Gastrocnemius medialis (tissue), 4 donors: ENCODE measurements at regions of chr5 and their contacts with region 1.

Region 1: DNA sequence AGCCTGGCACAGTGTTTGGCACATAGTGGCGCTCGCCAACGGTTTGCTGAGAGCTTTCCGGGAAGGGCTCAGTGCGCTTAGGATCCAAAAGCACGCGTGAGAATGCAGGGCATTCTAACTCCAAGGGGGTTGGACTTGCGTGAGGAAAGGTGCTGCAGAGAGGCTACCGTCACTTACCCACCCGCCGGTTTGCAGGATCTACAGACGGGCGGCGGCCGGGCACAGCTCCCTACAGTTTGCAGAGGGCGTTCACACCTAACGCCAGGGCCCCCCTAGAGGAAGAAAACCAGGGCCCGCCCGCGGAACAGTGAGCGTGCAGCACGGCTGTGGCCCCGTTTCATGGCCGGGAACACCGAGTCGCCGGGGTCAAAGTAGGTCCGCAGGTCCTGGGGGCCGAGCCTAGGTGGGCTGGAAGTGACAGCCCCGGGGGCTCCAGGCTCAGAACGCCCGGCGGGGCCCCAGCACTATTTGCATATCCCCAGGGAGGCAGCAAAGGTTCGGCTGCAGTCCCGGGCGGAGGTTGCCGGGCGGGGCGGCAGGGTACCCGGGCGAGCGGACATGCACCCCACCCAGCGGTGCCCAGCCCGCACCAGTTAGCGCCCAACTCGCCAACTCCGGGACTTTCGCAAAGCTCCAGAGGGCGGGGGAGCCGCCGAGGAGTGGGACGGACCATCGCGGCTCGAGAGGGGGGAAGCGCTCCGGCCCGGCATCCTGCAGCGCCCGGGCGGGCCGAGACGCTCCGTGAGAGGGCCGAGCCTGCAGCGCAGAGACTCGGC is 526 bp upstream of the GALNT10 start:
- DNase-seq: peak; percentile 55 to 74
- ATAC-seq: peak; percentile 91 to 93
- H3K4me3 ChIP-seq: peak overlapping the region; percentile 94 to 100 (median 96)
- H3K27ac ChIP-seq: peak overlapping the region; percentile 77 to 84 (median 80)
- H3K4me1 ChIP-seq: peaks cover 33 to 37% of the 10 kb centered on the region in 2 donors
- H3K27me3 ChIP-seq: no peaks in the 10 kb centered on the region
- CTCF ChIP-seq: peak in 3 of 5 experiments; percentile 19 to 54 (median 33)
- POLR2A ChIP-seq: no peak

Region 2: GRCh38 chr5:153400931-153401330 is 789.1 kb before region 1 on chr5:
- in situ Hi-C with region 1: no loop called
- intact Hi-C with region 1: no loop called
- DNase-seq: no peak
- ATAC-seq: no peak
- H3K4me3 ChIP-seq: no peak overlapping the region
- H3K27ac ChIP-seq: no peak overlapping the region
- H3K4me1 ChIP-seq: no peaks in the 10 kb centered on the region
- H3K27me3 ChIP-seq: no peaks in the 10 kb centered on the region
- CTCF ChIP-seq: no peak
- POLR2A ChIP-seq: no peak

Region 3: DNA sequence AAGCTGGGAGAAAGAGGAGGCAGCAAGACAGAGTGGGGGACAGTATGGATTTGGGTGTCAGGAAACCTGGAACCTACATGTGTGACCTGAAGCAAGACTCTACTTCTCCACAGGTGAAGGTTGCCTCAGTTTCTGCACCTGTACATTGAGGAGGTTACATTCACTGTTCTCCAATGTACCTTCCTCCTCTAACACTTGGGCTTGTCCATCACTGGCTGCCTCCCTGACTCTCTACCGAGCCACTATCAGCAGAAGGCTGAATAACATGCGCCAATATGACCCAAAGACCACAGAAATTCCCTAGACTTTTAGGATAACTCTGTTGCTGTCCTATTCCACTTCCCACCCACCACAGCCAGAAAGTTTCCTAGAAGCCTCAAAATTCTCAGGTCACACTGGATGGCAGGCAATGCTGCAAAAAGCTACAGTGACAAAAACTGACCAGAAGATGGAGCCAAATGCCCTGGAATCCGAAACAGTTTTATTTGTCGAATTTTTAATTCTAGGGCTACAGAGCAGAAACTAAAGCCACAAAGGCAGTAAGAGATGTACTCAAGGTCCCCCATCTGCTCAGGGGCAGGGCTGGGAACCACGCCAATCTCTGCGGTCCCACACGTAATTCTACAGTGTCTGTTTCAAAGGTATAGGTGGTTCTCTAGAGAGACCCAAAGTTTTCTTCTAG is 215.7 kb before region 1 on chr5:
- in situ Hi-C with region 1: no loop called
- intact Hi-C with region 1: loop called (anchors 5 kb)
- DNase-seq: no peak
- ATAC-seq: no peak
- H3K4me3 ChIP-seq: no peak overlapping the region
- H3K27ac ChIP-seq: no peak overlapping the region
- H3K4me1 ChIP-seq: no peaks in the 10 kb centered on the region
- H3K27me3 ChIP-seq: no peaks in the 10 kb centered on the region
- CTCF ChIP-seq: peak; percentile 29 to 56 (median 50)
- POLR2A ChIP-seq: no peak

Region 4: GRCh38 chr5:154038707-154039457 is 151.1 kb before region 1 on chr5 and contains the starts of genes FAM114A2 and MFAP3:
- in situ Hi-C with region 1: no loop called
- intact Hi-C with region 1: loop called (anchors 5 kb)
- DNase-seq: peak; percentile 82 to 83
- ATAC-seq: peak; percentile 96 to 98
- H3K4me3 ChIP-seq: peak within 1 kb of the TSS; percentile 75 to 93 (median 82)
- H3K27ac ChIP-seq: peak within 1 kb of the TSS; percentile 82 to 93 (median 88)
- H3K4me1 ChIP-seq: peaks cover 45 to 46% of the 10 kb centered on the region in 2 donors
- H3K27me3 ChIP-seq: no peaks in the 10 kb centered on the region
- CTCF ChIP-seq: peak in 1 of 5 experiments; percentile 7
- POLR2A ChIP-seq: peak; percentile 81 to 82
- total RNA-seq, gene FAM114A2: 12.2 to 19.0 (median 18.3) TPM
- total RNA-seq, gene MFAP3: 25.4 to 80.5 (median 28.7) TPM

Region 5: GRCh38 chr5:154072414-154073171 is 117.4 kb before region 1 on chr5:
- in situ Hi-C with region 1: loop called in 3 of 4 experiments (anchors 5 to 10 kb)
- intact Hi-C with region 1: no loop called
- DNase-seq: peak; percentile 40 to 58
- ATAC-seq: peak; percentile 73 to 89
- H3K4me3 ChIP-seq: no peak overlapping the region
- H3K27ac ChIP-seq: no peak overlapping the region
- H3K4me1 ChIP-seq: peaks cover 3 to 5% of the 10 kb centered on the region in 2 donors
- H3K27me3 ChIP-seq: no peaks in the 10 kb centered on the region
- CTCF ChIP-seq: peak; percentile 83 to 94 (median 89)
- POLR2A ChIP-seq: no peak

Region 6: GRCh38 chr5:154345255-154345952 is 155.4 kb after region 1 on chr5:
- in situ Hi-C with region 1: no loop called
- intact Hi-C with region 1: no loop called
- DNase-seq: no peak
- ATAC-seq: no peak
- H3K4me3 ChIP-seq: no peak overlapping the region
- H3K27ac ChIP-seq: no peak overlapping the region
- H3K4me1 ChIP-seq: no peaks in the 10 kb centered on the region
- H3K27me3 ChIP-seq: no peaks in the 10 kb centered on the region
- CTCF ChIP-seq: no peak
- POLR2A ChIP-seq: no peak

Region 7: GRCh38 chr5:154405078-154405792 is 215.2 kb after region 1 on chr5:
- in situ Hi-C with region 1: loop called in 3 of 4 experiments (anchors 10 to 25 kb)
- intact Hi-C with region 1: loop called (anchors 5 kb)
- DNase-seq: peak; percentile 53 to 62
- ATAC-seq: peak; percentile 84 to 90
- H3K4me3 ChIP-seq: peak overlapping the region; percentile 38 to 54 (median 44)
- H3K27ac ChIP-seq: no peak overlapping the region
- H3K4me1 ChIP-seq: peaks cover 0 to 3% of the 10 kb centered on the region in 2 donors
- H3K27me3 ChIP-seq: no peaks in the 10 kb centered on the region
- CTCF ChIP-seq: peak; percentile 78 to 89 (median 85)
- POLR2A ChIP-seq: no peak

Region 8: GRCh38 chr5:154445422-154446182 is 255.6 kb after region 1 on chr5 and contains the start of gene SAP30L:
- in situ Hi-C with region 1: no loop called
- intact Hi-C with region 1: loop called (anchors 5 kb)
- DNase-seq: peak; percentile 87 to 95
- ATAC-seq: peak; percentile 94 to 96
- H3K4me3 ChIP-seq: peak within 1 kb of the TSS; percentile 83 to 96 (median 88)
- H3K27ac ChIP-seq: peak within 1 kb of the TSS; percentile 75 to 84 (median 82)
- H3K4me1 ChIP-seq: peaks cover 22 to 42% of the 10 kb centered on the region in 2 donors
- H3K27me3 ChIP-seq: no peaks in the 10 kb centered on the region
- CTCF ChIP-seq: no peak
- POLR2A ChIP-seq: peak; percentile 71 to 83
- total RNA-seq, gene SAP30L: 18.8 to 35.6 (median 25.5) TPM